Activated CD4-positive, alpha-beta T cell treated with anti-CD3 and anti-CD28 coated beads, Interleukin-2, amount 10 ng/mL, durations not matched to agents 7 days and 5 days (primary cell): ENCODE measurements at regions of chr7 and their contacts with region 1.

Region 1: DNA sequence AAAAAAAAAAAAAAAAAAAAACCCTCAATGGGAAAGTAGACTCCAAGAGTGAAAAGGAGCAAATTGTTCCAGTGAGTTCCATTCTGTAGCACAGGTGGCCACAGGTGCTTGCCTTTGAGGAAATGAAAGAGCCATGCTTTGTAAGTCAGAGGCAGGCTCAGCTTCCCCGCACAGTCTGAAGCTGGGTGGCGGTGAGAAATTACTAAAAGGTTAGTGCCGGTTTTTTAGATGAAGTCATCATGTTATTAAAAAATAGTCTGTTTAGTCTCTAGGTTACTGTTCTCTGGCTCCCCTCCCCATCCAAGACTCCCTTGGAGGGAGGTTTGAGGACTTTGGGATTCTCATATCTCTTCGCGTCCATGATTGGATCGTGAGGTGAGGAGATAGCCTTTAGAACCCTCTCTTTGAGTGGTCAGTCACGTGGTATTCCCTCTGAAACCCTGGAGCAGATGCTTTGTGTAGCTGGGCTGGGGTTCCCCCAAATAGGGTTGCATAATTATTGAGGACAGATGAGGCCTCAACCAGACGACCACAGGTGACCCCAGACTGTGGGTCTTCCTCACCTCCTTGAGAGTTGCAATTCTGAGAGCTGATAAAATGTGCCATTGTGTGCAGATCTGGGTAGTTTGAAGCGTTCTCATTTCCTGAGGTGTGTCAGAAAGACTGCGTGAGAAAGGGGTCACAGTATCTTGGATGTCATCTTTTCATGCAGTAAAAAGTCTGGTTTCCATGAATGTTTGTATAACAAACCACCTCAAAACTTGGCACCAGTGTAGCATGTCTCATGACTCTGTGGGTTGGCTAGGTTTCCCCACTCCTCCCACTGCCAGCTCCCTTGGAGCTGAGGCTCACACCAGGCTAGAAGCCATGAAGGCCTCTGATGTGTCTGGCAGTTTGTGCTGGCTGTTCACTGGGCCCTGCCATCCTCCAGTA is 27.1 kb downstream of the OGDH start:
- DNase-seq: peak; percentile 61
- H3K4me3 Mint-ChIP-seq: no peak overlapping the region
- H3K27ac Mint-ChIP-seq: peak overlapping the region; percentile 99
- H3K4me1 Mint-ChIP-seq: peaks cover 93% of the 10 kb centered on the region
- H3K27me3 Mint-ChIP-seq: no peaks in the 10 kb centered on the region

Region 2: DNA sequence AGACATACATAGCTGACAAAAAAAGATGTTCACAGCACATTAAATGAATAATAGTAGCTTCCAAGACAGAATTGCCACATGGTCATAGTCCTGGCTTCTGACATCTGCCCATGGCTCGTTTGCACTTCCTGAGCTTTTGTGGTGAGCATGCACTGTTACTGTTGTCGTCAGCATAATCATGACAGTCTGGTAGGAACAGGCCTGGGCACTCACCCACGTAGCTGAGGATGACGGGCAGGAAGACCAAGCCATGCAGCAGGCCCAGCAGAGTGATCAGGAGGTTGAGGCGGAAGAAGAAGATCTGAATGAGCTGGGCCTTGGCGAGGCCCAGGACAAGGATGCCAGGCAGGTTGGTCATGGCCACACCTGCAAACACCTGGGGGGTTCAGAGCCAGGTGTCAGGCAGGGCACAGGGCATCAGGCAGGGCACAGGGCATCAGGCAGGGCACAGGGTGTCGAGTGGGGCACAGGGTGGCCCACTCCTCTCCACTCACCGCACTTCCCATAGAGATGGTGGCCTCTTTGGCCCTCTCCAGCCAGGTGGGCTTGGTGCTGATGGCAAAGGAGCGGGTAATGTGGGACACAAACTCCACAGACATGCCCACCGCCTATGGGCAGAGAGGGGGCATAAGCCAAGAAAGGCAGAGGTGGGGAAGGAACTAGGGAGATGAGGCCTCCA is 117.8 kb before region 1 on chr7:
- CTCF ChIA-PET with region 1: no interaction called
- POLR2A ChIA-PET with region 1: no interaction called
- DNase-seq: no peak
- H3K4me3 Mint-ChIP-seq: no peak overlapping the region
- H3K27ac Mint-ChIP-seq: no peak overlapping the region
- H3K4me1 Mint-ChIP-seq: no peaks in the 10 kb centered on the region
- H3K27me3 Mint-ChIP-seq: no peaks in the 10 kb centered on the region

Region 3: DNA sequence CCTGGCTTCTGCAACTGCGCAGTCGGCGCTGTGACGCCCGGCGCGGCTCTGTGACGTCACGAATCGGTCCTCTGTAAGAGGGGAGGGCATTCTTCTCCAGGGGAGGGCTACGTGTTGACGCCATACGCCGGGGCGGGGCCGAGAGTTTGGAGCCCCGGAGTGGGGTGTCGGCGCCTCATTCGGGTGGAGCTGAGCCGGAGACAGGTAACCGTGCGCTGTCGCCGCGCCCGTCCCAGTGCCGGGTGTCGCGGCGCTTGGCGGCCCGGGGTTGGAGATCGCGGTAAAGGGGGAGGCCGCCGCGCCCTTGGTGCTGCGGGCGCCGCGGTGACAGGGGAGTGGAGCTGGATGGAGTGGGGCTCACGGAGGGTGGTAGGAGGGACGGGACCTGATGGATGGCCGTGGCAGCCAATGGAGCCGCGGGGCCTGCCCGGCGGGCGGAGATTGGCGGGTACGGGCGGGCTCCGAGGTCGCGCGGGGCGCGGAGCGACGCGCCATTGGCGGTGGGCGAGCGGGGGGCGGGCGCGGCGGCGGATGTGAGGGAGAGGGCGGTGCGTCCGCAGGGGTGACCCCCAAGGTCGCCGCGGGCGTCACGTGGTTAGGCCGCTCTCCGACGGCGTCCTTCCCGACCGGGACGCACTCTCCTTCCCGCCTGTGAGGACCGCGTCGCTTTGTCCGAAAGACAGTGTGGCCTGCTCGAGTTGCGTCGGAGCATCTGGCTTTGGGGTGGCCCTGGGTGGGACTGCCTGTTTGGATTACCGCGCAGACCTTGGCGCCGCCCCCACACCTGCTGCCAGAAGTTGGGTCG is 26.9 kb before region 1 on chr7 and contains the start of gene OGDH:
- CTCF ChIA-PET with region 1: interaction called, 17 read pairs
- POLR2A ChIA-PET with region 1: interaction called, 3 read pairs
- DNase-seq: peak; percentile 100
- H3K4me3 Mint-ChIP-seq: peak within 1 kb of the TSS; percentile 91
- H3K27ac Mint-ChIP-seq: peak within 1 kb of the TSS; percentile 99
- H3K4me1 Mint-ChIP-seq: peaks cover 45% of the 10 kb centered on the region
- H3K27me3 Mint-ChIP-seq: peaks cover 3% of the 10 kb centered on the region
- total RNA-seq, gene OGDH: 114 to 121 TPM

Region 4: GRCh38 chr7:44654255-44654796 is 20.8 kb after region 1 on chr7:
- CTCF ChIA-PET with region 1: no interaction called
- POLR2A ChIA-PET with region 1: no interaction called
- DNase-seq: no peak
- H3K4me3 Mint-ChIP-seq: no peak overlapping the region
- H3K27ac Mint-ChIP-seq: no peak overlapping the region
- H3K4me1 Mint-ChIP-seq: no peaks in the 10 kb centered on the region
- H3K27me3 Mint-ChIP-seq: no peaks in the 10 kb centered on the region